Naive thymus-derived CD4-positive, alpha-beta T cell (primary cell): ENCODE measurements at regions of chr7 and their contacts with region 1.

Region 1: GRCh38 chr7:54292171-54292925 is 249.8 kb upstream of the VSTM2A start:
- DNase-seq: no peak
- ATAC-seq: no peak
- H3K4me3 ChIP-seq: no peak overlapping the region
- H3K4me3 Mint-ChIP-seq: no peak overlapping the region
- H3K27ac ChIP-seq: no peak overlapping the region
- H3K27ac Mint-ChIP-seq: no peak overlapping the region
- H3K4me1 ChIP-seq: no peaks in the 10 kb centered on the region
- H3K4me1 Mint-ChIP-seq: no peaks in the 10 kb centered on the region
- H3K27me3 ChIP-seq: no peaks in the 10 kb centered on the region
- H3K27me3 Mint-ChIP-seq: no peaks in the 10 kb centered on the region

Region 2: DNA sequence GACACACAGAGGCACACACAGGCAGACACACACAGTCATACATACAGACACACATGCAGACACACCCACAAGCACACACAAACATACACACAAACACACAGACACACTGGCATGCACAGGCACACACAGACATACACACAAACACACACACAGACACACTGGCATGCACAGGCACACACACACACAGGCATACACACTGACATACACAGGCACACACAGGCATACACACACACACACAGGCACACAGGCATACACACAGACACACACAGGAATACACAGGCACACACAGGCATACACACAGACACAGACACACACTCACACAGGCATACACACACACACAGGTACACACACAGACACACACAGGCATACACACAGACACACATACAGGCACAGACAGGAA is 90.8 kb before region 1 on chr7:
- CTCF ChIA-PET with region 1: no interaction called
- POLR2A ChIA-PET with region 1: no interaction called
- intact Hi-C with region 1: loop called in 1 of 2 experiments (anchors 10 kb)
- DNase-seq: no peak
- ATAC-seq: no peak
- H3K4me3 ChIP-seq: no peak overlapping the region
- H3K4me3 Mint-ChIP-seq: no peak overlapping the region
- H3K27ac ChIP-seq: no peak overlapping the region
- H3K27ac Mint-ChIP-seq: no peak overlapping the region
- H3K4me1 ChIP-seq: no peaks in the 10 kb centered on the region
- H3K4me1 Mint-ChIP-seq: no peaks in the 10 kb centered on the region
- H3K27me3 ChIP-seq: no peaks in the 10 kb centered on the region
- H3K27me3 Mint-ChIP-seq: no peaks in the 10 kb centered on the region